A549 (cell line): ENCODE measurements at regions of chr17 and their contacts with region 1.

Region 1: GRCh38 chr17:9924735-9925191 is 19.7 kb upstream of the RCVRN start:
- DNase-seq: peak; percentile 78 to 87
- ATAC-seq: peak; percentile 76 to 86
- H3K4me3 ChIP-seq: no peak overlapping the region
- H3K27ac ChIP-seq: peak overlapping the region; percentile 47 to 82
- H3K4me1 ChIP-seq: peaks cover 38% of the 10 kb centered on the region
- CTCF ChIP-seq: peak; percentile 90
- EP300 ChIP-seq: no peak
- POLR2A ChIP-seq: no peak
- RAD21 ChIP-seq: peak; percentile 92 to 94

Region 2: GRCh38 chr17:9498490-9498889 is 426.3 kb before region 1 on chr17:
- CTCF ChIA-PET with region 1: no interaction called
- POLR2A ChIA-PET with region 1: no interaction called
- DNase-seq: no peak
- ATAC-seq: no peak
- H3K4me3 ChIP-seq: no peak overlapping the region
- H3K27ac ChIP-seq: no peak overlapping the region
- H3K4me1 ChIP-seq: no peaks in the 10 kb centered on the region
- CTCF ChIP-seq: no peak
- EP300 ChIP-seq: no peak
- POLR2A ChIP-seq: no peak
- RAD21 ChIP-seq: no peak

Region 3: DNA sequence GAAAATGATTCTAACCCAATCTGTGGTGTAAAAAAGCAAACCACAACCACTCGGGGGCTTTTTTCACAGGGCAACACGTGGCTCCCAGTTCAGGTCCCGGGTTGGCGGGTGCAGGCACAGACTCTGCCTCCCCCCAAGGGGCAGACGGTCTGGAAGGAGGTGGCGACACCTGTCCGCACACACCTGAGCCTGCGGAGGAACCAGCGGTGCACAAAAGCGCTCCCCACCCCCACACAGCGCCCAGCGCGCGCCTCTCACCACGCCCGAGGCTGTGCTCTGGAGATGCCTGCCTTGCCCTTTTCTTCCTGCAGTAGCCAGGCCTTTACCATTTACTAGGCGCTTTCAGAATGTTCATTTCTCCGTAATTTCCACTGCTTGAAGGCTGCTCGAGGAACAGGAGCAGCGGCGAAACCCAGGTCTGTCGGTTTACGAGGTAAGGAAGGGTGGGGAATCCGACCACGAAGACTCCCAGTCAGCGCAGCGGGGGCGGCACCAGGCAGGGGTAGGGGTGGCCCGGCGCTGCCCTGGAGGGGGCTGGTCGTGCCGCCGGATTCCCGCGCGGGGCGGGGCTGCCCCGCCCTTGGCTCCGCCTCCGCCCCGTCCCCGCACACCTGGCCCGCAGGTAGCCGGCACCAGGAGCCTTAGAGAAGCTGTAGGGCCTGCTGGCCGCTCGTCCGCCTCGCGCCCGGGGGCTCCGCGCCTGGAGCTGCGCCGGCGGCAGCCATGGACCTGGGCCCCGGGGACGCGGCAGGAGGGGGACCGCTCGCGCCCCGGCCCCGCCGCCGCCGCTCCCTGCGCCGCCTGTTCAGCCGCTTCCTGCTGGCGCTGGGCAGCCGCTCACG is 279.6 kb before region 1 on chr17 and contains the start of gene USP43:
- CTCF ChIA-PET with region 1: interaction called, 12 read pairs
- POLR2A ChIA-PET with region 1: interaction called, 3 read pairs
- DNase-seq: peak; percentile 47 to 72
- ATAC-seq: peak; percentile 73 to 82
- H3K4me3 ChIP-seq: peak within 1 kb of the TSS; percentile 77
- H3K27ac ChIP-seq: peak within 1 kb of the TSS; percentile 77 to 96
- H3K4me1 ChIP-seq: peaks cover 37% of the 10 kb centered on the region
- CTCF ChIP-seq: no peak; the same call in 2 of the 3 replicates
- EP300 ChIP-seq: no peak
- POLR2A ChIP-seq: peak; percentile 48
- RAD21 ChIP-seq: no peak
- polyA plus RNA-seq, gene USP43: 3.4 and 4.9 TPM in 2 replicates

Region 4: DNA sequence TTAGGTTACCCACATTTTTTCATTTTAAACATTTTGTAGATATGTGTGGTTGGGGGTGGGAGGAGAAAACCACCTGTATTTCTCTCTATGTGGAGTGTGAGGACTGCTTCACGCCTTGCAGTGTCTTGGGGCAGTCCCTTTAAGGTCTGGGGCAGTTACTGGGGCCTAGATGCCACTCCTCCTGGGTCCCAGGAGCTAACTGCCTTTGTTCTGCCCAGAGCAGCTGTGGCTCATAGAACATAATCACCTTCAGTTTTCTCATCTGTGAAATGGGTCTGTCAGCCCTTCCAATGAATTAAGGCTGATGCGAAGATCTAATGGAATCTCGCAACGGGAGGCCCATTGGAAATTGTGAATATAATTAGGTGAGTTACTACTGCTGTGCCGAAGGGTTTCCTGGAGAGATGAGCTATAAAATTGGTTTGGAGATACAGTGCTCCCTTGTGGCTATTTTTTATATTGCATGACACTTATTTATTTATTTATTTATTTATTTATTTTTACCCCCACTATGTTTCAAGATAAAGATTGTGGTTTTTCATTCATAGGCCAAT is 156.3 kb before region 1 on chr17:
- CTCF ChIA-PET with region 1: interaction called, 58 read pairs
- POLR2A ChIA-PET with region 1: no interaction called
- DNase-seq: peak; percentile 55 to 60
- ATAC-seq: peak in 1 of 2 experiments; percentile 52; a peak in 3 of 6 replicates
- H3K4me3 ChIP-seq: no peak overlapping the region
- H3K27ac ChIP-seq: peak overlapping the region; percentile 43 to 72
- H3K4me1 ChIP-seq: peaks cover 14% of the 10 kb centered on the region; the same call in 2 of the 3 replicates
- CTCF ChIP-seq: peak; percentile 80
- EP300 ChIP-seq: no peak
- POLR2A ChIP-seq: no peak
- RAD21 ChIP-seq: peak; percentile 55 to 74

Region 5: DNA sequence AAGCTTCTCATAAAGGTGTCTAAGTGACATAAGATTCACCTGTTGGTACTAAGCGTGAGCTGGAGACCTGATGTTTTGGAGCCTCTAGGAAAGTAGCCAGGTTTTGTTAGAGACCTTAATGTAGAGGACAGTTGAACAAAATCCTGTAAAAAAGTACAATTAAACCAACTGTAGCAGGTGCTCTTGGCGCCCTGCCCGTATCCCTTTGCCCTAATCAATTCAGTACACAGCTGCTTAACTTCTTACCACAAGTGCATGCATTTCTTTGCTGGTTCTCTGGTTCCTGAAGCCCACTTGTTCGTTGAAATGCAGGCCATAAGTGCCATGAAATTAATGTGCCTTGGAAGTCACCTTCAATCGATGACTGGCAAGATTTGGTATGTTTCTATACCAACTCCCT is 74.6 kb before region 1 on chr17:
- CTCF ChIA-PET with region 1: interaction called, 10 read pairs
- POLR2A ChIA-PET with region 1: no interaction called
- DNase-seq: no peak
- ATAC-seq: no peak
- H3K4me3 ChIP-seq: no peak overlapping the region
- H3K27ac ChIP-seq: peak overlapping the region in 1 of 2 experiments; percentile 48; a peak in 2 of 6 replicates
- H3K4me1 ChIP-seq: peaks cover 6% of the 10 kb centered on the region; the same call in 1 of the 3 replicates
- CTCF ChIP-seq: no peak
- EP300 ChIP-seq: no peak
- POLR2A ChIP-seq: no peak
- RAD21 ChIP-seq: no peak

Region 6: GRCh38 chr17:9912121-9913099 is 12.4 kb before region 1 on chr17:
- CTCF ChIA-PET with region 1: interaction called, 128 read pairs
- POLR2A ChIA-PET with region 1: no interaction called
- DNase-seq: no peak
- ATAC-seq: no peak
- H3K4me3 ChIP-seq: no peak overlapping the region
- H3K27ac ChIP-seq: peak overlapping the region in 1 of 2 experiments; percentile 55; a peak in 2 of 6 replicates
- H3K4me1 ChIP-seq: peaks cover 20% of the 10 kb centered on the region
- CTCF ChIP-seq: no peak
- EP300 ChIP-seq: no peak
- POLR2A ChIP-seq: no peak
- RAD21 ChIP-seq: no peak

Region 7: GRCh38 chr17:9959377-9959981 is 34.7 kb after region 1 on chr17:
- CTCF ChIA-PET with region 1: interaction called, 133 read pairs
- POLR2A ChIA-PET with region 1: no interaction called
- DNase-seq: peak; percentile 74 to 91
- ATAC-seq: peak; percentile 77 to 91
- H3K4me3 ChIP-seq: no peak overlapping the region
- H3K27ac ChIP-seq: peak overlapping the region in 1 of 2 experiments; percentile 26; a peak in 2 of 6 replicates
- H3K4me1 ChIP-seq: peaks cover 4% of the 10 kb centered on the region; the same call in 1 of the 3 replicates
- CTCF ChIP-seq: peak; percentile 85
- EP300 ChIP-seq: no peak
- POLR2A ChIP-seq: no peak
- RAD21 ChIP-seq: peak; percentile 76 to 77

Region 8: DNA sequence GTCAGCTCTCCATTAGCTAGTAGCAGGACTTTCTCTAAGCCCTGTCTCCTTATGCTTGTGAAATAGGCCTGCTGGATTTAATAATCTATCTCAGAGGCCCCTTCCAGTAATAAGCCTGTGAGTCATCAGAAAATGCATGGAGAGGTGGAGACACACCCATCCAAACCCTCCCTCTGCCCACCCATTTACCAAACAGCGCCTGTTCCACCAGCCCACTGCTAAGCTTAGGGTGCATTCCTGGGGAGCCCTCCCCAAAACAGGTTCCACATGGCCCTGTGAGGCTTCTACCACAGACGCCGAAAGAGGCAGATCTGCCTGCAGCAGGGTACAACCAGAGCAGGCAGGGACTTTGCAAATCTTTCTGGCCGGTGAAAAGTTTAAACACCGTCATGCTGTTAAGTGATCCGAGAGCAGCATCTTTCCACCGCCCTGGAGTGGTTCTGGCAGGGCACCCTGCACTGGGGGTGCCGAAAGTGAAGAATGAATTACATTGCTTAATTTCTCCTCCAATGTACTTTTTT is 174.3 kb after region 1 on chr17:
- CTCF ChIA-PET with region 1: no interaction called
- POLR2A ChIA-PET with region 1: no interaction called
- DNase-seq: no peak
- ATAC-seq: no peak; a peak in 3 of 6 replicates
- H3K4me3 ChIP-seq: no peak overlapping the region
- H3K27ac ChIP-seq: peak overlapping the region in 1 of 2 experiments; percentile 20; a peak in 2 of 6 replicates
- H3K4me1 ChIP-seq: peaks cover 17% of the 10 kb centered on the region; the same call in 2 of the 3 replicates
- CTCF ChIP-seq: no peak
- EP300 ChIP-seq: no peak
- POLR2A ChIP-seq: no peak
- RAD21 ChIP-seq: no peak